HepG2 (cell line): ENCODE measurements at regions of chr2 and their contacts with region 1.

Region 1: DNA sequence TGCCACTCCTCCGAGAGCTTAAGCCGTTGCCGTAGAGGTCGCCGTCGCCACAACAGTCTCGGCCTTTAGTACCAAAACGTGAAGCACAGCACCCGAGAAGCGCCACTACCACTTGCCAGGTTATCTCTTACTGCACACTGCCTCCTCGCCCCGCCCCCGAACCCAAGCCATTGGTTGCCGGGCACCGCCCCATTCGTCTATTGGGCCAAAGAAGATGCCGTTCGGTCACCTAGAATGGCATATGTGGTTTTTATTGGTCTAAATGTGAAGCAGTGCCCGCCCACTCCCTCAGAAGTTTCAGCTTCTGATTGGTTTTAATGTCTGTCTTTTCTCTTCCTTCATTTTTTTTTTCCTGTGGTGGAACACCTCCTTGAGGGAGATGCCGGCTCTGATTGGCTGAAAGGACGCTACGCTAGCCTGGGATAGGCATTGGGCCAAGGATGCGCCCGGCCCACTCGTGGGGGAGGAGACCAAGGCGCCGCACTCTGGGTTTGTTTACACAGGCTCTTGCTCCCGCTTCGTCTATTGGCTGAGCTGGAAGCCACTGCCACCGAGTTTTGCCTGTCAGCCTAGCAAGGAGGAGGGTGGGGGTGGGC is at the start of gene PAIP2B:
- DNase-seq: peak; percentile 85
- ATAC-seq: peak; percentile 91
- H3K4me3 ChIP-seq: peak within 1 kb of the TSS; percentile 32 to 66 (median 35); a peak in 5 of 6 replicates
- H3K27ac ChIP-seq: no peak within 1 kb of the TSS
- H3K4me1 ChIP-seq: 0 out of 2 replicates have a peak, but pooled peaks cover 11% of the 10 kb centered on the region
- H3K27me3 ChIP-seq: peaks cover 4 to 29% of the 10 kb centered on the region in 2 experiments
- CTCF ChIP-seq: no peak
- EP300 ChIP-seq: no peak
- POLR2A ChIP-seq: no peak
- RAD21 ChIP-seq: no peak
- total RNA-seq, gene PAIP2B: 0.29 and 0.46 TPM in 2 replicates

Region 2: GRCh38 chr2:71276311-71277146 is 49.5 kb after region 1 on chr2:
- CTCF ChIA-PET with region 1: no interaction called
- POLR2A ChIA-PET with region 1: no interaction called
- in situ Hi-C with region 1: no loop called
- intact Hi-C with region 1: loop called (anchors 5 kb)
- DNase-seq: peak; percentile 48
- ATAC-seq: peak; percentile 97
- H3K4me3 ChIP-seq: peak overlapping the region in 2 of 3 experiments; percentile 39 to 62; a peak in 4 of 6 replicates
- H3K27ac ChIP-seq: no peak overlapping the region
- H3K4me1 ChIP-seq: peaks cover 20% of the 10 kb centered on the region
- H3K27me3 ChIP-seq: peaks cover 5 to 35% of the 10 kb centered on the region in 2 experiments
- CTCF ChIP-seq: no peak
- EP300 ChIP-seq: no peak
- POLR2A ChIP-seq: no peak
- RAD21 ChIP-seq: no peak